ENCODE measurements at regions of chr14 and their contacts with region 1.

Region 1: DNA sequence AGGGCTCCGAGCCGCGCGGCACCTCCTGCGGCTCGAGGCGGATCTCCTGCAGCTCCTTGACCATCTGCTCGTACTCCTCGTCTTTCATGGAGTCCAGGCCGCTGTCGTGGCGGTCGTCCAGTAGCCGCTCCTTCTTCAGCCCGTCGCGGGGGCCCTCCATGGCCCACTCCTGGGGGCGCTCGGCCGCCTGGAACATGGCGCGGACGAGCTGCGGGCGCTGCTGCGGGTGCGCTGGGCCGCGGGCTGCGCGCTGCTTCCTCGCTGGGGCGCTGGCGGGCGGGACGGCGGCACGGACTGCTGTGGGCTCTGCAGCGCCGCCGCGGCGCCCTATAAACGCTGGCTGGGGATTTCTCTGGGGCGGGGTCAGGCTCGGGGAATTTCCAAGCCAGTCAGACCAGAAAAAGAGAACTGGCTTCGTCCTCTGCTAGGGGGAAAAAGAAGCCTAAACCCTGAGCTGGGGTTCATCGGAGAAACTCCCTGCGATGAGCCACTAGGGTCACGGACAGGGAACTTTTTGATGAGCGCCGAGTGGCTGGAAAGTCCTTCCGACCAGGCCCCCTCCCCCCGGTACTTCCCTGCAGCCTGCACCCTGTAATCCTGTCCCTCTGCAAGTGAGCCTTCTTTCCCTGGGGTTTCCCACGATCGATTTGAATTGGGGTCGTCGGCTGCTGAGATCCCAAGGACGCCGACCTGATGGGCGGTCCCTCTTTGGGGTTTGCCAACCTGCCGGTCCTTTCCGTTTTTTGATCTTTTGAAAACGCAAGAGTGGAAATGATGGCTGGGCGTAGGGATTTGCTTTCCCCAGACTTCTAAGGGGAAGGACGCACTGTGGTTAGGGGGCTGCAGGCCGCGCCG is at the start of gene NFKBIA:
- DNase-seq: peak; percentile 89 to 98
- H3K4me3 ChIP-seq: peak within 1 kb of the TSS; percentile 86
- CTCF ChIP-seq: no peak
- POLR2A ChIP-seq: peak in 1 of 2 donors; percentile 95
- total RNA-seq, gene NFKBIA: 431 to 923 (median 565) TPM

Region 2: GRCh38 chr14:35229495-35230089 is 175.1 kb before region 1 on chr14:
- intact Hi-C with region 1: loop called (anchors 10 kb)
- DNase-seq: no peak
- H3K4me3 ChIP-seq: no peak overlapping the region
- CTCF ChIP-seq: no peak
- POLR2A ChIP-seq: no peak

Region 3: GRCh38 chr14:35336494-35337268 is 68.0 kb before region 1 on chr14:
- intact Hi-C with region 1: loop called (anchors 5 kb)
- DNase-seq: peak; percentile 88 to 96
- H3K4me3 ChIP-seq: no peak overlapping the region
- CTCF ChIP-seq: peak in 1 of 3 donors; percentile 100
- POLR2A ChIP-seq: no peak

Region 4: GRCh38 chr14:35420036-35420811 is 15.5 kb after region 1 on chr14:
- intact Hi-C with region 1: no loop called
- DNase-seq: no peak
- H3K4me3 ChIP-seq: no peak overlapping the region
- CTCF ChIP-seq: no peak
- POLR2A ChIP-seq: no peak